Right ventricle myocardium inferior (tissue), 1 donor: ENCODE measurements at regions of chr4 and their contacts with region 1.

Region 1: DNA sequence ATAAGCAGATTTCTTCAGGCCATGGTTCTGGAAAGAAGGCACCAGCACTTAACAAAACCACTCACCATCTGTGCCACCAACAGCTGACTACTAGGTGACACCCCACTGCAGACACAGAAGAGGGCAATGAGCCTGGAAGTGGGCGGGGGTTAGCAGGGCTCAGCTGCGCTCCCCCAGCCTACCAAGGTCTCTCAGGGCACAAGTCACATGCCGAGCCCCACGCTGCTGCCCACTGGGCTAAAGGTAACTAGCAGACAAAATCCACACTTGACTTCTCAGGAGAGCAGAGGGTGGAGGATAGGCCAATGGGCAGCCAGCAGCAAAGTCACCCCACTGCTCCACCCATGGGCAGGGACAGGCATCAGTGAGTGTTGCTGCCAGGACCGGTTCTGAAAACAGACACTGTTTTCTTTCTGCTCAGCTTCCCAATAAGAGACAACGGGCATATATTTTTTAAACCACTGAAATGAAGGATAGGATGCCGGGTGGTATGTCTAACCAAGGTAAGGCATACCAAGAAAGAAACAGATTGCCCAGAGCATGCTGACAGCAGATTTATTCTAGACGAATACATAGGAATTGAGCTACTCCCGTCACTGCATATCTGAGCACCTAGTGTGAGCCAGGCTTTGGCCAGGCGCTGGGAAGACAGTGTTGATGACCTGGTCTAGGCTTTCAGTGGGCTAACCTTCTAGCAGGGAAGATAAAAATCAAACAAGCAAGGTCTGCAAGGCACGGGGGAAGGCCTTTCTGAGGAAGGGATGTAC is 20.1 kb downstream of the ACSL1 start:
- DNase-seq: peak; percentile 90
- ATAC-seq: peak; percentile 92

Region 2: GRCh38 chr4:184825896-184826690 is 20.4 kb after region 1 on chr4 and contains the start of gene ACSL1:
- intact Hi-C with region 1: loop called (anchors 2 kb)
- DNase-seq: peak; percentile 97
- ATAC-seq: peak; percentile 91
- total RNA-seq, gene ACSL1: 445 TPM

Region 3: GRCh38 chr4:185115827-185116232 is 310.2 kb after region 1 on chr4:
- intact Hi-C with region 1: loop called (anchors 10 kb)
- DNase-seq: peak; percentile 82
- ATAC-seq: peak; percentile 92